ENCODE measurements at regions of chr22 and their contacts with region 1.

Region 1: GRCh38 chr22:50341977-50342650 is 1.0 kb upstream of the PPP6R2 start:
- DNase-seq: peak; percentile 90
- ATAC-seq: peak; percentile 86

Region 2: GRCh38 chr22:50244420-50245213 is 97.5 kb before region 1 on chr22 and contains the start of gene TUBGCP6:
- intact Hi-C with region 1: loop called (anchors 10 kb)
- DNase-seq: peak; percentile 99
- ATAC-seq: peak; percentile 94
- total RNA-seq, gene TUBGCP6: 18.4 TPM

Region 3: GRCh38 chr22:50306753-50307749 is 35.1 kb before region 1 on chr22 and contains the start of gene PLXNB2:
- intact Hi-C with region 1: no loop called
- DNase-seq: peak; percentile 93
- ATAC-seq: peak; percentile 61
- total RNA-seq, gene PLXNB2: 81.7 TPM

Measured in left ventricle myocardium superior (tissue), 1 donor.